Mammary epithelial cell (primary cell): ENCODE measurements at regions of chr21 and their contacts with region 1.

Region 1: DNA sequence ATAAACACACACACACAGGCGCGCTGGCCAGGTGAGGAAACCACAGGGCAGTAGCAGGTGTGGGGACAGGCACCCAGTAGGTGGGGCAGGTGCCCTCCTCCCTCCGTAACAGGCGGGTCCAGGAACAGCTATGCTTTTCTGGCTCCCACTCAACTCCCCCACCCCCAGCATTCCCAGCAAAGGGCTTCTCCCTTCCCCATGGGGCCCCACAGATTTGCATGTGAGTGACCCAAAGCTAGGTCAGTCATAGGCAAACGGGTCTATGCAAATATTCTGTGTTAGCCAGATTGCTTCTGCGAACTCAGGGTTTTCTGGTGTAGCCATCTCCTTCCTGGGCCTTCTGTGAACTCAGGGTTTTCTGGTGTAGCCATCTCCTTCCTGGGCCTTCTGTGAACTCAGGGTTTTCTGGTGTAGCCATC is 114.2 kb downstream of the SIK1 start:
- DNase-seq: no peak
- H3K4me3 ChIP-seq: no peak overlapping the region
- H3K27ac ChIP-seq: no peak overlapping the region
- H3K4me1 ChIP-seq: peaks cover under 1% of the 10 kb centered on the region
- H3K27me3 ChIP-seq: no peaks in the 10 kb centered on the region
- CTCF ChIP-seq: no peak

Region 2: GRCh38 chr21:43352568-43353281 is 40.0 kb after region 1 on chr21:
- CTCF ChIA-PET with region 1: no interaction called
- dilution Hi-C with region 1: loop called (anchors 5 kb)
- in situ Hi-C with region 1: no loop called
- intact Hi-C with region 1: no loop called
- DNase-seq: no peak
- H3K4me3 ChIP-seq: no peak overlapping the region
- H3K27ac ChIP-seq: no peak overlapping the region
- H3K4me1 ChIP-seq: peaks cover 17% of the 10 kb centered on the region
- H3K27me3 ChIP-seq: no peaks in the 10 kb centered on the region
- CTCF ChIP-seq: no peak